Gastrocnemius medialis (tissue), 4 donors: ENCODE measurements at regions of chr19 and their contacts with region 1.

Region 1: DNA sequence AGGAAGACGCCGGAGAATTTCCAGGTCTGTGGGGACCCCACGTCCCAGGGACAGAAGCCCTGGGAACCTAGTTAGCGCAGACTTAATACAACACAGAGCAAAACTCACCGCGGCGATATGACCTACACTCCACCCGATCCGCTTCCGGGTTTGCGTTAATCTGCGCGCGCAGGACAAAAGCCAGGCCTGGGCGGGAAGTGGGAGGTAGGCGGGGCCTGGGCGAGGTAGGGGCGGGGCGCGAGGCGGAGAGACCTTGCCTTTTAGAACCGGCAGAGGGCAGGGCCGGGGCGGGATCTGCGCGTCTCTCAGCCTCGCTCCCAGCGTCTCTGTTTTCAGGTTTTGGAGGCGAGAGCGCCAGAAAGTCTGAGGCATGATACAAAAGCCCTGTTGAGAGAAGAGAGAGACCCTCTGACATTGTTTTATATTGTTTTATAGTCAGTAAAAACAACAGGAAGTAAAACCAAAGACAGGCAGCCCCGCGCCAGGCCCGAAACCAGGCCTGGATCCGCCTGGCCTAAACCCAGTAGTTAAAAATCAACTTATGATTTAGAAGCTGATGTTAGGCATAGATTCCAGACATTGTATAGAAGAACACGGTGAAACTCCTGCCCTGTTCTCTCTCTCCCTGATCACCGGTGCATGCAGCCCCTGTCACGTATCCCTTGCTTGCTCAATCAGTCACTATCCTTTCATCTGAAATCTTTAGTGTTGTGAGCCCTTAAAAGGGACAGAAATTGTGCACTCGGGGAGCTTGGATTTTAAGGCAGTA is at the start of gene ZNF611:
- DNase-seq: peak; percentile 93 to 95
- ATAC-seq: peak; percentile 96 to 97
- H3K4me3 ChIP-seq: peak within 1 kb of the TSS; percentile 72 to 95 (median 78)
- H3K27ac ChIP-seq: peak within 1 kb of the TSS; percentile 73 to 85 (median 80)
- H3K4me1 ChIP-seq: peaks cover 3 to 10% of the 10 kb centered on the region in 2 donors
- H3K27me3 ChIP-seq: no peaks in the 10 kb centered on the region
- CTCF ChIP-seq: peak in 4 of 5 experiments; percentile 76 to 83 (median 79)
- POLR2A ChIP-seq: peak; percentile 67 to 75
- total RNA-seq, gene ZNF611: 1.7 to 4.0 (median 2.5) TPM

Region 2: GRCh38 chr19:52248241-52248640 is 486.8 kb before region 1 on chr19:
- in situ Hi-C with region 1: loop called in 2 of 4 experiments (anchors 25 kb)
- intact Hi-C with region 1: loop called (anchors 10 kb)
- DNase-seq: peak in 1 of 2 donors; percentile 17
- ATAC-seq: peak in 1 of 2 donors; percentile 49
- H3K4me3 ChIP-seq: no peak overlapping the region
- H3K27ac ChIP-seq: no peak overlapping the region
- H3K4me1 ChIP-seq: no peaks in the 10 kb centered on the region
- H3K27me3 ChIP-seq: no peaks in the 10 kb centered on the region
- CTCF ChIP-seq: peak; percentile 21 to 66 (median 52)
- POLR2A ChIP-seq: no peak

Region 3: DNA sequence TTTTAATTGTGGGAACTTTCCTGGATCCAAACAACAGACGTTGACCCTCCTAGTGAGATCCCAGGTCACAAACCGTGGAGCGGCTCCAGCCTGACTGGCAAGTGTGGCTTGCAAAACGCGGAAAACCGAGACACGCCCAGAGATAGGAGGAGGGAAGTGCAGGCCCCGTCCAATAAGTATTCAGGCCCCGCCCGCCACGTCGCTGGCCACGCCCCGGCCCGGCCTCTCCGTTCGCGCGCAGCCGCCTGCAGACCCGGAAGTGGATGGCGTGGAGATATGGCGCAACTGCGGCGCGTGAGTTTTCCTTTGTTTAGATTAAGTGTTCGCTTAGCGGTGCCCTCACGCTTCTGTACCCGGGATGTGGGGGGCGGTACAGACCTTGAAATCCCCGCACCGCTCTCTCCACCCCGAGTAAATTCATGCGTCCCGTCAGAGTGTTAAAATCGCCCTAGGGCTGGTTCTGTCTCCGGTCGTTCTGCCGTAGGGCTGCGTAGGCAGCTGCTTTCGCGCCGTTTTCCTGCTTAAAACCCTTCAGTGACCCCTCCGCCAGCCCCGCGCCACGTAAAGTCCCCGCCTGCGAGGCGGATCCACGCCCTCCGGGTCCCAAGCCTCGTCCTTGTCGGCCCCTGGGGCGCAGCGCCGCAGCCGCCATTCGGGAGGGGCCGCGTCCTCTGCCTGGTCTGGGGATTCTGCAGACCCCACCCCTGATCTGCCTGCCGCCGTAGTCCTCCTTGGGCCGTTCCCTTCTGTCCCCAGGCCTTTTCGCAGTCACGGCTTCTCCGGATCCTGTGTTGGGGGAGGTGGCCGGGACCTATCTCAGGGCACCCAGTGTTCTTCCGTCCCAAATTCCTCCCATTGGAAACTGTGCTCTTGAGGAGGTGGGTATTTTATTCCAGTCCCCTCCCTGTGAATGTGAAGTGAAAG is 465.5 kb before region 1 on chr19 and contains the start of gene ZNF766:
- in situ Hi-C with region 1: loop called in 2 of 4 experiments (anchors 25 kb)
- intact Hi-C with region 1: no loop called
- DNase-seq: peak; percentile 95 to 97
- ATAC-seq: peak; percentile 99
- H3K4me3 ChIP-seq: peak within 1 kb of the TSS; percentile 68 to 97 (median 92)
- H3K27ac ChIP-seq: peak within 1 kb of the TSS; percentile 90 to 98 (median 94)
- H3K4me1 ChIP-seq: peaks cover 9 to 21% of the 10 kb centered on the region in 2 donors
- H3K27me3 ChIP-seq: no peaks in the 10 kb centered on the region
- CTCF ChIP-seq: no peak
- POLR2A ChIP-seq: peak; percentile 83 to 87
- total RNA-seq, gene ZNF766: 6.6 to 11.6 (median 7.7) TPM

Region 4: GRCh38 chr19:52690369-52691214 is 44.5 kb before region 1 on chr19:
- in situ Hi-C with region 1: no loop called
- intact Hi-C with region 1: loop called (anchors 5 kb)
- DNase-seq: peak; percentile 76 to 82
- ATAC-seq: peak; percentile 89 to 92
- H3K4me3 ChIP-seq: peak overlapping the region; percentile 57 to 70 (median 60)
- H3K27ac ChIP-seq: peak overlapping the region; percentile 81 to 84 (median 82)
- H3K4me1 ChIP-seq: peaks cover 3 to 8% of the 10 kb centered on the region in 2 donors
- H3K27me3 ChIP-seq: peaks cover 0 to 6% (median 3%) of the 10 kb centered on the region in 3 donors
- CTCF ChIP-seq: peak in 2 of 5 experiments; percentile 26 to 34
- POLR2A ChIP-seq: peak; percentile 38 to 72

Region 5: GRCh38 chr19:52786457-52787359 is 51.6 kb after region 1 on chr19 and contains the start of gene ZNF600:
- in situ Hi-C with region 1: no loop called
- intact Hi-C with region 1: loop called (anchors 1 kb)
- DNase-seq: peak; percentile 67 to 75
- ATAC-seq: peak; percentile 79 to 88
- H3K4me3 ChIP-seq: peak within 1 kb of the TSS; percentile 67 to 85 (median 73)
- H3K27ac ChIP-seq: peak within 1 kb of the TSS; percentile 41 to 71 (median 60)
- H3K4me1 ChIP-seq: no peaks in the 10 kb centered on the region
- H3K27me3 ChIP-seq: no peaks in the 10 kb centered on the region
- CTCF ChIP-seq: peak in 3 of 5 experiments; percentile 18 to 33 (median 28)
- POLR2A ChIP-seq: peak in 1 of 2 donors; percentile 23
- total RNA-seq, gene ZNF600: 0.72 to 3.7 (median 1.1) TPM

Region 6: DNA sequence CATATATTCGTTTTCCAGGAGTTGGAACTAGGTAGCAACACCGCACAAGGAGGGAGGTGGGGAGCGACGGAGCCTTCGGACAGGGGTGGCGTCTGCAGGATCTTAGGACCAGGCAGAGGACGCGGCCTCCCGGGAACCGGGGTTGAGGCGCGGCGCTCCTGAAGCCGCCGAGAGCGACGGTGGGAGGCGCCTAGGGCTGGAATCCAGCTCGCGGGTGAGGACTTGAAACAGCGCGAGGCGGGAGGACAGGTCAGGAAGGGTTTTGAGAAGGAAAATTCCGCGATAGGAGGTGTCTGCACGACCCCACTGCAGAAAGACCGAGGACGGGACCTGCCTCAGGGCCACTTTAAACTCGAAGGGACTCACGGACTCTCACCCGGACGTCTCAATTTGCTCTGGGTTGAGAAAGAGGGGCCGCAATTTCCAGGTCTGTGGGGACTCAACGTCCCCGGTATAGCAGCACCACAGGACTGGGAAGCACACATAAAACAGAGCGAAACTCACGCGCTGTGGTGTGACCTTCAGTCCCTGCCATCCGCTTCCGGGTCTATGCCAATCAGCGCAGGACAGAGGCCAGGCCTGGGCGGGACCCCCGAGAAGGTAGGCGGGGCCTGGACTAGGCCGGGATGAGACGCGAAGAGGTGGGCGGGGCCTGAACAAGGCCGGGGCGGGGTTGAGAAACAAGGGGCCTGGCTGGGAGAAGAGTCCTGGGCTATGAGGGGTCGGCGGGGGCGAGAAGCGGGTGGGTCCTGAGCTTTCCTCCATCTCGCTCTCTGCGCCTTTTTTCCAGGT is 162.3 kb after region 1 on chr19 and contains the start of gene ZNF320:
- in situ Hi-C with region 1: no loop called
- intact Hi-C with region 1: loop called (anchors 1 kb)
- DNase-seq: peak; percentile 85 to 93
- ATAC-seq: peak; percentile 99
- H3K4me3 ChIP-seq: peak within 1 kb of the TSS; percentile 66 to 96 (median 85)
- H3K27ac ChIP-seq: peak within 1 kb of the TSS; percentile 81 to 94 (median 88)
- H3K4me1 ChIP-seq: peaks cover 8 to 14% of the 10 kb centered on the region in 2 donors
- H3K27me3 ChIP-seq: no peaks in the 10 kb centered on the region
- CTCF ChIP-seq: no peak
- POLR2A ChIP-seq: peak; percentile 53 to 57
- total RNA-seq, gene ZNF320: 1.3 to 2.7 (median 2.5) TPM in 3 of 4 donors, not detected in the other